ENCODE measurements at regions of chr1 and their contacts with region 1.

Region 1: GRCh38 chr1:76285578-76286135 is 211.1 kb downstream of the ST6GALNAC3 start:
- DNase-seq: no peak
- H3K4me3 ChIP-seq: no peak overlapping the region
- CTCF ChIP-seq: no peak

Region 2: DNA sequence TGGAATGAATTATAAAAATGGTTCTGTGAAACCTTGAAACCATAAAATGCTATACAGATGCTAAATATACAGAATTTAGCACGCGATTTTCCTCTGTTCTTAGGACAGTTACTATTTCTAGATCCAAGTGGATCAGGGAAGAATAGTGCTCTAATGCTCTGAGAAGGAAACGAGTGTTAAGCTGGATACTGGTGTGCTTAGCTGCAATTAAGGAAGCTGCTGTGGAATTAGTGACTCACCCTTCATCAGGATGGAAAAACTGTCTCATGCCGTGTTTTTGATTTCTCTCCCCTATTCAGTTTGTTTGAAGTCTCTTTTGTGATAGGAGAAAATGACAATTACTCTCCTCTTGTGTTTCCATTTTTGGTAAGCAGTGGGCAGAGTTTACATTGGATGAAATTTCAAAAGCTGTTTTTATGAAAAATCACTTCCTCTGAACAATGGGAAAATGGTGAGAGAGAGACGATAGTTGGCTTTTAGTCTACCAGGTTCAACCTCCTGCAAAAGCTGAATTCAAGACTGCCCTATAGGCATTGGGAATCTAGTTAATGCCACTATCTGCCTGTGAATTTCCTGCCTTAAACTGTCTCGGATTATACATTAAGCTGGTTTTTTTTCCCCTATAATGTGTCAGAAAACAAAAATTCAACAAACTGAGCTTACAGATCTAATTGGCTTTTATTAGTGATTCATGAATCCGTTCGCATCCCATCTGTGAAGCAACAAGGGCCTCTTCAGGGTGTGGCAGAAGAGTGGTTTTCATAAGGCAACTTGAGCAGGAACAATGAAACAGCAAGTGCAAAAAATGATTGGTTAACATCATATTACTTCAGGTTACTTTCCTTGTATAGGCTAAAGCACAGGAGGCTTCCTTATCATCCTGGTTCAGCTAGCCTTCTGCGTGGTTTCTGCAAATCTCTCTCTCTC is 31.3 kb before region 1 on chr1:
- in situ Hi-C with region 1: loop called (anchors 5 kb)
- DNase-seq: peak; percentile 31
- H3K4me3 ChIP-seq: no peak overlapping the region
- CTCF ChIP-seq: no peak